Endothelial cell of umbilical vein (primary cell): ENCODE measurements at regions of chr6 and their contacts with region 1.

Region 1: GRCh38 chr6:83514866-83515466 is 2.6 kb downstream of the PRSS35 start:
- DNase-seq: peak; percentile 75
- H3K4me3 ChIP-seq: no peak overlapping the region
- H3K27ac ChIP-seq: no peak overlapping the region
- H3K4me1 ChIP-seq: peaks cover 9% of the 10 kb centered on the region
- H3K27me3 ChIP-seq: peaks cover 0 to 1% of the 10 kb centered on the region in 2 experiments
- CTCF ChIP-seq: peak; percentile 57 to 61
- POLR2A ChIP-seq: no peak

Region 2: DNA sequence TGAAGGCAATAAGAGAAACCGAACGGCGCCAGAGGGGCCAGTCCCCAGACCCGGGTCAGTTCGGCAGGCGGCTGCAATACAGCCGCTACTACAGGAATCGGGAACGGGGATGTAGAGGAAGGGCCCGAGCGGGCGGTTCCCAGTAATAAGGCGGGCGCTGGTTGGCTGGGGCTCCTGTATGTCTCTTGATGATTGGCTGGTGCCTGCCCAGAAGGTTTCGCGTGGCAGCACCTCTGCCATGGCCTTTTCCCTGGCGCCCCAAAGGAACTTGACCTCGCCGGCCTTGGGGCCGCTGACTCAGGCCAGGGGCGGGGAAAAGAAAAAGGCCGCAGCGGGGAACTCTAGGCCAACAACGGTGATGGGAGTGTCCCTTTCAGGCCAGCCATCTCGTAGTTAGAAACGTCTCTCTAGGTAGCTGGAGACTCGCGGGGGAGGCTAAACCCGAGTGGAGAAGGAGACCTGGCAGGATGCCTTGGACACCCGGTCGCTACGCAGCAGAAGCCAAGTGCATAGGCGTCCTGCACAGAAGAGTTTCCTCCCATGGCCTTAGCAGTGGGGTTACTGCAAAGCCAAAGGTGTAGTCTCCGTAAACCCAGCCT is 1267.2 kb before region 1 on chr6 and contains the start of gene IBTK:
- CTCF ChIA-PET with region 1: interaction called, 3 read pairs
- POLR2A ChIA-PET with region 1: no interaction called
- dilution Hi-C with region 1: no loop called
- intact Hi-C with region 1: loop called (anchors 5 kb)
- DNase-seq: peak; percentile 93
- H3K4me3 ChIP-seq: peak within 1 kb of the TSS; percentile 60 to 91 (median 67)
- H3K27ac ChIP-seq: peak within 1 kb of the TSS; percentile 67
- H3K4me1 ChIP-seq: peaks cover 35% of the 10 kb centered on the region
- H3K27me3 ChIP-seq: no peaks in the 10 kb centered on the region
- CTCF ChIP-seq: no peak
- POLR2A ChIP-seq: peak; percentile 87
- total RNA-seq, gene IBTK: 29.5 and 30.5 TPM in 2 replicates

Region 3: GRCh38 chr6:83215131-83216047 is 299.6 kb before region 1 on chr6:
- CTCF ChIA-PET with region 1: interaction called, 319 read pairs
- POLR2A ChIA-PET with region 1: no interaction called
- dilution Hi-C with region 1: loop called (anchors 25 kb)
- intact Hi-C with region 1: no loop called
- DNase-seq: peak; percentile 82
- H3K4me3 ChIP-seq: no peak overlapping the region
- H3K27ac ChIP-seq: no peak overlapping the region
- H3K4me1 ChIP-seq: no peaks in the 10 kb centered on the region
- H3K27me3 ChIP-seq: no peaks in the 10 kb centered on the region
- CTCF ChIP-seq: peak; percentile 82 to 83
- POLR2A ChIP-seq: no peak

Region 4: DNA sequence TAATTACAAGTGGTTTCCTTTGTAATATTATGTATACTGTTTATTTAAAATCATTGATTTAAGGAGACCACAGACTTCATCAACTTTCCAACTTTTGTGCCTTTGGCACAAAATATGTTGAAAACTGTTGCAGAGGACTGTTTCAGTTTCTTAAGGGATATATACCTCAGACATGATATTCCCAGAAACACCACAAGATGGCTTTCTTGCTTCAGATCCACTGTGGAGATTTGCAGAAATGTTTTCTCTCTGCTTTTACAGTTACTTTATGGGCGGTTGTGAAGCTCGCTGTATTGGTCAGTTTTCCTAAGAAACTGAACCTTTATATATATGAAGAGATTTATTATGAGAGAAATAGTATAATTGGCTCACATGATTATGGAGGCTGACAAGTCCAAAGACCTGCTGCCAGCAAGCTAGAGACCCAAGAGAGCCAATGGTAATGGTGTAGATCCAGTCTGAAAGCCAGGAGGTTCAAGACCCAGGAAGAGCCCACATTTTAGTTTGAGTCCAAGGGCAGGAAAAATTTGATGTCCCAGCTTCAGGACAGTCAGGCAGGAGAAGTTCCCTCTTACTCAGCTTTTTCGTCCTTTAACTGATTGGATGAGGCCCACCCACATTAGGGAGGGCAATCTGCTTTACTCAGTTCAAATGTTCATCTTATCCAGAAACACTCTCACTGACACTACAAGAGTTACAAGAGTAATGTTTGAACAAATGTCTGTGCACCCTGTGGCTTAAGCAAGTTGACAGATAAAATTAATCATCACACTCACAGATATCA is 96.9 kb before region 1 on chr6:
- CTCF ChIA-PET with region 1: interaction called, 145 read pairs
- POLR2A ChIA-PET with region 1: no interaction called
- dilution Hi-C with region 1: no loop called
- intact Hi-C with region 1: loop called (anchors 1 kb)
- DNase-seq: peak; percentile 49
- H3K4me3 ChIP-seq: no peak overlapping the region
- H3K27ac ChIP-seq: no peak overlapping the region
- H3K4me1 ChIP-seq: no peaks in the 10 kb centered on the region
- H3K27me3 ChIP-seq: no peaks in the 10 kb centered on the region
- CTCF ChIP-seq: peak; percentile 18 to 37
- POLR2A ChIP-seq: no peak

Region 5: GRCh38 chr6:83536034-83536646 is 21.2 kb after region 1 on chr6:
- CTCF ChIA-PET with region 1: interaction called, 20 read pairs
- POLR2A ChIA-PET with region 1: no interaction called
- dilution Hi-C with region 1: no loop called
- intact Hi-C with region 1: no loop called
- DNase-seq: peak; percentile 58
- H3K4me3 ChIP-seq: no peak overlapping the region
- H3K27ac ChIP-seq: no peak overlapping the region
- H3K4me1 ChIP-seq: no peaks in the 10 kb centered on the region
- H3K27me3 ChIP-seq: peaks cover 0 to 7% of the 10 kb centered on the region in 2 experiments
- CTCF ChIP-seq: peak; percentile 69 to 81
- POLR2A ChIP-seq: no peak

Region 6: GRCh38 chr6:84588697-84589080 is 1073.7 kb after region 1 on chr6:
- CTCF ChIA-PET with region 1: no interaction called
- POLR2A ChIA-PET with region 1: no interaction called
- dilution Hi-C with region 1: no loop called
- intact Hi-C with region 1: no loop called
- DNase-seq: no peak
- H3K4me3 ChIP-seq: no peak overlapping the region
- H3K27ac ChIP-seq: no peak overlapping the region
- H3K4me1 ChIP-seq: peaks cover 9% of the 10 kb centered on the region
- H3K27me3 ChIP-seq: no peaks in the 10 kb centered on the region
- CTCF ChIP-seq: no peak
- POLR2A ChIP-seq: no peak